ENCODE measurements at regions of chr3 and their contacts with region 1.

Region 1: DNA sequence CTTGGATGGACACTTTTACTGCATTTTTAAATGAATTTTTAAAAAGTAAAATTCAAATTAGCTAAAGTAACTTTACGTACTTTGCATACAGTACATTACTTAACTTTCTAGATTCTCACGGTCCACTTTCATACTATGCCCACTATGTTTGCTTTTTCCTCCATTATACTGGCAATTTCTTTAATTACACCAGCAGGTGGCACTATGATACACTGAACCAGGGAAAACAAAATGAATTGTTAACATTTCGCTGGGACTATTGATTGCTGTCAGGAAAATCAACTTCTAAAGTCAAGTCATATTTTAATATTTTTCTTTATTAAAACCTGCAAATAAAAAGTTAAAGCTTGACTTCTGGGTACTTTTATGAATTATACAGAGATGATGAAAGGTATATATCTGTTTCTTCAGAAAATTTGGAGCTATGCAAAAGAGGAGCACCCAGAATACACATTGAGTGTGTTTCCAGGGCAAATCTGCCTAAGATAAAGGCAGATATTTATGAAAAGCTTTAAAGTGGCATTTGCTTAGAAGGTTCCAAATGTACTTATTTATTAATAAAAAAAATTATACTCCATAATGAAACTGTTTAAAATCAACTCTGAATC is 21.8 kb upstream of the POU1F1 start:
- DNase-seq: peak; percentile 39
- H3K4me3 Mint-ChIP-seq: no peak overlapping the region
- H3K27ac Mint-ChIP-seq: no peak overlapping the region
- H3K4me1 Mint-ChIP-seq: no peaks in the 10 kb centered on the region
- H3K27me3 Mint-ChIP-seq: no peaks in the 10 kb centered on the region
- CTCF ChIP-seq: peak; percentile 27

Region 2: DNA sequence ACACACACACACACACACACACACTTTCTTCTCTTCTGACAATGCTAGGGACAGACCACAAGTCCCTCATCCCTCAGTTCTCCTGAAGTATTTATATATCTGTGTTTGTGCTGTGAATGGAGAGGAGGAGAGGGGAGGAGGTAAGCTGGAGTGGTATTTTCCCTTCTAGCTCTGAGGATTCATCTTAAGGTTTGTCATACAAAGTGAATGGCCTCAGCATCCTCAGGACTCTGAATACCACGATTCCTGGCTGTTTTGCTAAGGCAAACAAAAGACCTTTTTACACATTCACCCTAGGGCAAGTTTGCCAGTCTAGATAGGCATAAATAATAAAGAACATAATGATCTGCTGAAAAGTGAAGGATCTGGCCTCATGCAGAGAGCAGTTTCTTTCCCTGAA is 136.8 kb before region 1 on chr3:
- CTCF ChIA-PET with region 1: no interaction called
- intact Hi-C with region 1: no loop called
- DNase-seq: no peak
- H3K4me3 Mint-ChIP-seq: no peak overlapping the region
- H3K27ac Mint-ChIP-seq: no peak overlapping the region
- H3K4me1 Mint-ChIP-seq: no peaks in the 10 kb centered on the region
- H3K27me3 Mint-ChIP-seq: no peaks in the 10 kb centered on the region
- CTCF ChIP-seq: no peak

Region 3: DNA sequence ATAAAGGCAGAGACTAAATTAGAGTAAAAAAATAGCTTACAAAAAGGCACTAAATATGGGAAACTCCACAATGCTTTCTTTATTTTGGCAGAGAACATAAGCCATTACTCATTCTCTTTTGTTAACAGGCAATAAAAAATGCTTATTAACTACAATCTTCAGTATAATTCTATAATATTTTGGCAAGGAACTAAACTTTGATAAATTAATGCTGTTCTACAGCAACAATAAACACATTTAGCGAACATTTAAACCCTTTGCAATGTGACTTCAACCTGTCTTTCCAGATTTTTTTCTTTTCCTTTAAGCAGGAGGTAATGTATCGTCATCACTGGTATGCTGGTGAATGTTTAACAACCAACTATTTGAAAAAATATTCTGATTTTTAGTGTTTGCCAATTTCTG is 20.4 kb after region 1 on chr3:
- CTCF ChIA-PET with region 1: no interaction called
- intact Hi-C with region 1: no loop called
- DNase-seq: no peak
- H3K4me3 Mint-ChIP-seq: no peak overlapping the region
- H3K27ac Mint-ChIP-seq: peak overlapping the region; percentile 97
- H3K4me1 Mint-ChIP-seq: peaks cover 55% of the 10 kb centered on the region
- H3K27me3 Mint-ChIP-seq: no peaks in the 10 kb centered on the region
- CTCF ChIP-seq: no peak

Region 4: GRCh38 chr3:87350364-87351199 is 52.4 kb after region 1 on chr3:
- CTCF ChIA-PET with region 1: interaction called, 8 read pairs
- intact Hi-C with region 1: loop called (anchors 1 kb)
- DNase-seq: no peak
- H3K4me3 Mint-ChIP-seq: no peak overlapping the region
- H3K27ac Mint-ChIP-seq: peak overlapping the region; percentile 79
- H3K4me1 Mint-ChIP-seq: peaks cover 61% of the 10 kb centered on the region
- H3K27me3 Mint-ChIP-seq: no peaks in the 10 kb centered on the region
- CTCF ChIP-seq: peak; percentile 62

Region 5: GRCh38 chr3:87410110-87410509 is 111.9 kb after region 1 on chr3:
- CTCF ChIA-PET with region 1: no interaction called
- intact Hi-C with region 1: no loop called
- DNase-seq: no peak
- H3K4me3 Mint-ChIP-seq: no peak overlapping the region
- H3K27ac Mint-ChIP-seq: no peak overlapping the region
- H3K4me1 Mint-ChIP-seq: no peaks in the 10 kb centered on the region
- H3K27me3 Mint-ChIP-seq: no peaks in the 10 kb centered on the region
- CTCF ChIP-seq: no peak